Posterior cingulate gyrus (tissue), 11 donors: ENCODE measurements at regions of chr5 and their contacts with region 1.

Region 1: GRCh38 chr5:74919487-74919886 is 53.3 kb upstream of the FAM169A start:
- DNase-seq: no peak

Region 2: GRCh38 chr5:73280821-73281746 is 1638.4 kb before region 1 on chr5:
- intact Hi-C with region 1: no loop called
- DNase-seq: no peak

Region 3: DNA sequence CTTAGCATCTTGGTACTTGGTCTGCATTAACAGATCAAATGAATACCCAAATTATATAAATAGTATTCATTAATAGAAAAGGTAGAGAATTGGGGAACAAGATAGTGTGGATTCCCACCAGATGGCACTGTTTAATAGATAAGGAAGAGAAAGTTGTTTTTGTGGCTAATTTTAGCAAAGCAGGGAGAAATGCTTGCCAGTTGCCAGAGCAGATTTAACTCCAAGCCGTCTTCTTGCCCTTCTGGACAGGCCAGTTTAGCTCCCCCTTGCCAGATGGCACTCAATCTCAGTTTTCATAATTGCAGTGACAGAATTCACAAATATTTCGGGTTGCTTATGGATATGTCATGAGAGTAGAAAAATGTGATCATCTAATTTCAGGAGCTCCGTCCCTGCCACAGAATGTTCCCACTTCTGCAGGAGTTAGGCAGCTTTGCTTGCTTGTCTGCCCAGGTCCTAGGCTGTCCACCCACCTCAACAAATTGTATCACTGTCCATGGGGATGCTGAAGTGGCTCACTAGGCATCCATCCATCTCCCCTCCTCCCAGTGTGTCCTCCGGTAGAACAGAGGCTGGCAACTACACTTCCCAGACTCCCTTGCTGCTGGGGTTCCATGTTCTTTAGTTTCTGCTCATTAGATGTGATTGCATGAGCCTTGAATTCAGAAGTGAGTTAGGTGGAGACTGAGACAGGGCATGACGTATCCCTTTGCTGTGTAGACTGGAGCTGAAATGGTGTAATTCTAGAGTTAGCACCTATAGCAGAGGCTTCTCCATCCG is 246.3 kb before region 1 on chr5:
- intact Hi-C with region 1: loop called (anchors 1 kb)
- DNase-seq: peak in 7 of 10 donors; percentile 19 to 91 (median 52)

Region 4: GRCh38 chr5:74778609-74779008 is 140.9 kb before region 1 on chr5:
- intact Hi-C with region 1: no loop called
- DNase-seq: no peak

Region 5: GRCh38 chr5:75021219-75021618 is 101.7 kb after region 1 on chr5:
- intact Hi-C with region 1: no loop called
- DNase-seq: peak in 1 of 10 donors; percentile 14